HEK293 (cell line): ENCODE measurements at regions of chr3 and their contacts with region 1.

Region 1: GRCh38 chr3:128133273-128134084 is 9.9 kb upstream of the RUVBL1 start:
- H3K4me3 ChIP-seq: no peak overlapping the region
- H3K27ac ChIP-seq: no peak overlapping the region
- H3K4me1 ChIP-seq: no peaks in the 10 kb centered on the region
- CTCF ChIP-seq: peak; percentile 83

Region 2: DNA sequence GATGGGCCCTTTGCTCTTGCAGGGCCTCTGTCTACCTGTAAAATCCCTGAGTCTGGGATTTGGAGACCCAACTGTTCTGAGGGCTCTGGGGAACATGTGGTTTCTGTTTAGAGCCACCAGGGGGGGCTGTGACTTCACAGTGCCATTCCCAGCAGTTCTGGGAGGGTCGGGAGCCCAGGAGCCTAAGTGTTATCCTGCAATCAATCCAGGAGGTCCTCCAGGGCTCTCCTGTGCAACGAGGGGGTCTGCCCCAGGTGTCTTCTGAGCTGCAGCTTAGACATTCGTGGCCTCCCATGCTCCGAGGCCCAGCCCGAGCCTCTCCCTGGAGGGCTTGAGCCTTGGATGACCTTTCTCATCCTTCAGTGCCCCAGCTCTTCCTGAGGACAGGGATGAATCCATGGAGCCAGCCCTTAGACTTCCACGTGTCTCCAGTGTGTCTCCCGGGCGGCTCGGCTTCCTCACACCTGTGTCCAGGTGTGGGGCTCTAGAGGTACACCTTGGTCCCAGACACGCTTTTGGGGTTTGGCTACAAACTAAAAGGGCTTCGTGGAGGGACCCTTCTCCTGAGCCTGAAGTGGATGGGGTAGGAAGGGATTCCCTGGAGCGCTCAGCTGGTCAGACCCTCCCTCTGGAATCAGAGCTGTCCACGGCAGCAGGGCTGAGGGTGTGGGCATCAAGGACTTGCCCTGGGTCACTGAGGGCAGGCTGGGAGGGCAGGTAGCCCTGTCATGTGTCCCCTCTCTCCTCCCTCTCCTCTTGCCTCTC is 481.1 kb before region 1 on chr3:
- CTCF ChIA-PET with region 1: interaction called, 10 read pairs
- POLR2A ChIA-PET with region 1: no interaction called
- H3K4me3 ChIP-seq: no peak overlapping the region
- H3K27ac ChIP-seq: no peak overlapping the region
- H3K4me1 ChIP-seq: no peaks in the 10 kb centered on the region
- CTCF ChIP-seq: peak; percentile 37

Region 3: GRCh38 chr3:128011140-128011539 is 122.3 kb before region 1 on chr3:
- CTCF ChIA-PET with region 1: interaction called, 10 read pairs
- POLR2A ChIA-PET with region 1: interaction called, 4 read pairs
- H3K4me3 ChIP-seq: no peak overlapping the region
- H3K27ac ChIP-seq: no peak overlapping the region
- H3K4me1 ChIP-seq: no peaks in the 10 kb centered on the region
- CTCF ChIP-seq: 0 out of 2 replicates have a peak, but pooled peaks have one; percentile 31

Region 4: GRCh38 chr3:128068211-128068620 is 65.3 kb before region 1 on chr3:
- CTCF ChIA-PET with region 1: interaction called, 23 read pairs
- POLR2A ChIA-PET with region 1: no interaction called
- H3K4me3 ChIP-seq: no peak overlapping the region
- H3K27ac ChIP-seq: no peak overlapping the region
- H3K4me1 ChIP-seq: no peaks in the 10 kb centered on the region
- CTCF ChIP-seq: no peak

Region 5: DNA sequence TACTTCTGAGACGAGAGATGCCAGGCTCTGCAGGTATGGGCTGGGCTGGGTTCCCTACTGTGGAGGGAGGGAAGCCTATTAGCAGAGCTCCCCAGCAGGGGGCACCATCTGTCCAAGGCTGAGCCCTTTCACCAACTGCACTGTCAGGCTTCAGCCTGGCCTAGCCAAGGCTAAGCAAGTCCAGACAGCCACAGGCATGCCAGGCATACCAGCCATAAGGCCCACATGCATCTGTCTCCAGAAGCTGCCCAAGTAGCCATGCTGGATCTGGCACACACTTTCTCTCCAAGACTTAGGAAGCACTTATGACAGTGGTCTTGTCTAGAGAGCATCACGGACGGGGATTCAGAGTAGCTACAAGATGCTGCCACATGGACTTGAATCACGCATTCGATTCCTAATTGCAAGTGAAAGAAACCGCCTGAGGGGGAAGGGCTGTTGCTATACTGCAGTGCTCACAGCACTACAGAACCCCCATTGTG is 38.2 kb before region 1 on chr3:
- CTCF ChIA-PET with region 1: interaction called, 35 read pairs
- POLR2A ChIA-PET with region 1: no interaction called
- H3K4me3 ChIP-seq: no peak overlapping the region
- H3K27ac ChIP-seq: no peak overlapping the region; the same call in 1 of the 2 replicates
- H3K4me1 ChIP-seq: no peaks in the 10 kb centered on the region
- CTCF ChIP-seq: peak; percentile 48; the same call in 1 of the 2 replicates

Region 6: DNA sequence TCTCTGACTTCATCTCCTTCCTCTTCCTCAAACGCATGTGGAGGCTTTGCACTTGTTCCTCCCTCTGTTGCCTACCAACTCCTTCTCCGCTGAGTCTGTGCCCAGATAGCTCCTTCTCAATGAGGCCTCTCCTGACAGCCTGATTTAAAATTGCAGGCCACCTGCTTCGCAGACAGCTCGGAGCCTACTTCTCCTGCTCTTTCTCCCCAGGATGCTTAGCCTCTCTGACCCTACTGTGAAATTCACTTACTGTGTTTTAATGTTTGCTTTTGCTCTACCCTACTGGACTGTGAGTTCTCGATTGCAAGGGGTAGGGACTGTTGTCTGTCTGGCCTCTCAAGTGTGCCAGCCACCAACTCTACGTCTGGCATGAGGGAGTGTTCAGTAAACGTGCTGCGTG is 103.2 kb after region 1 on chr3:
- CTCF ChIA-PET with region 1: no interaction called
- POLR2A ChIA-PET with region 1: no interaction called
- H3K4me3 ChIP-seq: no peak overlapping the region
- H3K27ac ChIP-seq: no peak overlapping the region
- H3K4me1 ChIP-seq: no peaks in the 10 kb centered on the region
- CTCF ChIP-seq: no peak

Region 7: DNA sequence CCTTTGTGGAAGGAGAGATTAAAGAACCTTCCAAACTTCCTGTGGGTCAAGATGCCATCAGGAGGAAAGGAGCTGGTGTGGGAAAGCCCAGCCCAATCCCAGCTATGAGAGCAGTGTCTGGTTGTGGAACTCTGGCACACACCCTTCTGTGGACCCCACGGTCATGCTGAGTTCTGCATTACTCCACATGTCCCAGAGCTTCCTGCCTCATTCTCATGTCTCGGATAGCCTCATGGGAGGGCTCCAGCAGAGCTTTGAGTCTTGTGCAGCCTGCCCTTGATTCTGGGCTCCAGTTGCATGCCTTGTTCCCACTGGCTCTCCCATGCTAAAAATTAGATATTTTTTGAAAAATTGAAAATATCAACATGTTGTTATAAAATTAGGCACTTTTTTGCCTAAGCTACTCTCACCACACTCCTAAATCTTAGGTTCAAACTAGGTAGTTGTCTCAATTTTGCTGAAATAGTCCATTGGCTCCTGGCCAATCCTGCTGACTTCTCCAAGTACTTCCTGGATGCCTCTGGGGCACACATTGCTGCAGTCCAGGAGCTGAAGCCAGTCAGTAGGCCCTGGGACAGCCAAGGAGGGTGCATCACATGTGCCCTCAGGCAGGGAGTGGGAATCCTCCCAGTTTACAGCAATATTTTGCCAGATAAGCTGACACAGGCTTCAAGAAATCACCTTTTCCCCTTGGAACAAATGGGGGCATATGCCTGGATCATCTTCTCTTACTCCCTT is 164.1 kb after region 1 on chr3:
- CTCF ChIA-PET with region 1: no interaction called
- POLR2A ChIA-PET with region 1: no interaction called
- H3K4me3 ChIP-seq: no peak overlapping the region
- H3K27ac ChIP-seq: no peak overlapping the region
- H3K4me1 ChIP-seq: no peaks in the 10 kb centered on the region
- CTCF ChIP-seq: no peak